Activated CD8-positive, alpha-beta memory T cell treated with anti-CD3 and anti-CD28 coated beads, Interleukin-2, amount 10 ng/mL, durations not matched to agents 7 days and 5 days (primary cell): ENCODE measurements at regions of chr9 and their contacts with region 1.

Region 1: DNA sequence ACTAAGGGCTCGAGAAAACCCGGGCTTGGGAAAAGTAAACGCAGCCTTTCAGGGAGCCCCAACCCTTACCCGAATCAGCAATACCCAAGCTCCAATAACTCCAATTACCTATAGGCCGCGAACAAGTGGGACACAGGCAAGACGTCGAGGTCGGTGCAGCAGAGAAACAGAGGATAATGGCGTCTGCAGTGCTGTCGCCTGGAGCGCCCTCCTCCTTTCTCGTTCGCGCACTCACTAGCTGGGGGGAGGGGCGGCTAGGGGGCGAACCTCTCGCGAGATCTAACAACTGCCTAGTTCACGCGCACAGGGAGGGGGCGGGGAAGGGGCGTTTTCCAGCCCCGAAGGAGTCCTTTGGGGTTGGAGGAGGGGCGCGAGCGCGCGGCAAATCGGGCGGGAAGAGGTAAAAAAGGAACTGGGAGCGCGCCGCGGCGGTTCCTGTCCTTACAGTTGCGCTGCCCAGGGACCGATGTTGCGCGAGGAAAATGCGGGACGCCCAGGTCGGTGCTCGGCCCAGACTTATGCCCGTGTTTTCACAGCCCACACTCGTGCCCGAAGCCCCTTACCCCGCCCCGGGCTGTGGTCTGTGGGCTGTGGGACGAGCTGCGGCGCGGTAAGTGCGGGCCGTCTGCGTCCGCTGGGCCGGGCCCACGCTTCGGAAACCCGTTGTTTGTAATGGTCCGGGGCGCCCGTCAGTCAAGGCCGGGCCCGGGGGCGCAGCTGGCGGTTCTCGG is at the start of gene RMI1:
- DNase-seq: peak; percentile 99
- ATAC-seq: peak; percentile 76
- H3K4me3 Mint-ChIP-seq: peak within 1 kb of the TSS; percentile 99
- H3K27ac Mint-ChIP-seq: peak within 1 kb of the TSS; percentile 96
- H3K4me1 Mint-ChIP-seq: peaks cover 46% of the 10 kb centered on the region
- H3K27me3 Mint-ChIP-seq: no peaks in the 10 kb centered on the region
- total RNA-seq, gene RMI1: 24.9 to 25.5 TPM

Region 2: GRCh38 chr9:83956434-83957247 is 23.9 kb before region 1 on chr9:
- CTCF ChIA-PET with region 1: interaction called, 11 read pairs
- DNase-seq: peak; percentile 81
- ATAC-seq: peak; percentile 86
- H3K4me3 Mint-ChIP-seq: peak overlapping the region; percentile 96
- H3K27ac Mint-ChIP-seq: peak overlapping the region; percentile 92
- H3K4me1 Mint-ChIP-seq: peaks cover 22% of the 10 kb centered on the region
- H3K27me3 Mint-ChIP-seq: no peaks in the 10 kb centered on the region

Region 3: GRCh38 chr9:84002344-84002743 is 21.8 kb after region 1 on chr9:
- CTCF ChIA-PET with region 1: no interaction called
- DNase-seq: no peak
- ATAC-seq: peak; percentile 72
- H3K4me3 Mint-ChIP-seq: no peak overlapping the region
- H3K27ac Mint-ChIP-seq: peak overlapping the region; percentile 65
- H3K4me1 Mint-ChIP-seq: peaks cover 14% of the 10 kb centered on the region
- H3K27me3 Mint-ChIP-seq: no peaks in the 10 kb centered on the region